Breast epithelium (tissue), 4 donors: ENCODE measurements at regions of chrX and their contacts with region 1.

Region 1: GRCh38 chrX:30141966-30142365 is 73.4 kb upstream of the MAGEB2 start:
- DNase-seq: no peak
- H3K4me3 ChIP-seq: no peak overlapping the region
- H3K27ac ChIP-seq: no peak overlapping the region
- H3K4me1 ChIP-seq: no peaks in the 10 kb centered on the region
- H3K27me3 ChIP-seq: peaks cover 0 to 32% of the 10 kb centered on the region in 2 donors
- CTCF ChIP-seq: peak in 1 of 3 donors; percentile 8
- POLR2A ChIP-seq: no peak

Region 2: DNA sequence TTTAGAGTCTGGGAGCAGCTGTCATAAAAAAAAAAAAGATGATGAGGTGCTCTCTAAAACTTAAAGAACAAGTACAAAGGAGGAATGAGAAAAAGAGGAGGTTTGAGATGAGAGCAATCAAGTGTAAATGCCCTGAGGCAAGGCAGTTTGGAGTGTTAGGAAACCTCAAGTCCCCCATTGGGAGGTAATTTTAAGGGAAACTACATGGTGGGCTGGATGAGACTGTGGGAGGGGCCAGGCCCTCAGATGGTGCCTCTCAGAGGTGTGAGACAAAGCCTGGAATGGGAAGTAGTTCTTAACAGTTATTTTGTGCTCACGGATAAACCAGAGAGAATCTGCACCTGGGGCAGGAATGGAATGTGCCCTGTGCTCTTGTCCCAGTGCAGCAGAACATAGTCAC is 86.6 kb after region 1 on chrX:
- intact Hi-C with region 1: loop called (anchors 5 kb)
- DNase-seq: no peak
- H3K4me3 ChIP-seq: no peak overlapping the region
- H3K27ac ChIP-seq: no peak overlapping the region
- H3K4me1 ChIP-seq: no peaks in the 10 kb centered on the region
- H3K27me3 ChIP-seq: peaks cover 0 to 4% of the 10 kb centered on the region in 2 donors
- CTCF ChIP-seq: no peak
- POLR2A ChIP-seq: no peak